Naive thymus-derived CD4-positive, alpha-beta T cell (primary cell): ENCODE measurements at regions of chr22 and their contacts with region 1.

Region 1: DNA sequence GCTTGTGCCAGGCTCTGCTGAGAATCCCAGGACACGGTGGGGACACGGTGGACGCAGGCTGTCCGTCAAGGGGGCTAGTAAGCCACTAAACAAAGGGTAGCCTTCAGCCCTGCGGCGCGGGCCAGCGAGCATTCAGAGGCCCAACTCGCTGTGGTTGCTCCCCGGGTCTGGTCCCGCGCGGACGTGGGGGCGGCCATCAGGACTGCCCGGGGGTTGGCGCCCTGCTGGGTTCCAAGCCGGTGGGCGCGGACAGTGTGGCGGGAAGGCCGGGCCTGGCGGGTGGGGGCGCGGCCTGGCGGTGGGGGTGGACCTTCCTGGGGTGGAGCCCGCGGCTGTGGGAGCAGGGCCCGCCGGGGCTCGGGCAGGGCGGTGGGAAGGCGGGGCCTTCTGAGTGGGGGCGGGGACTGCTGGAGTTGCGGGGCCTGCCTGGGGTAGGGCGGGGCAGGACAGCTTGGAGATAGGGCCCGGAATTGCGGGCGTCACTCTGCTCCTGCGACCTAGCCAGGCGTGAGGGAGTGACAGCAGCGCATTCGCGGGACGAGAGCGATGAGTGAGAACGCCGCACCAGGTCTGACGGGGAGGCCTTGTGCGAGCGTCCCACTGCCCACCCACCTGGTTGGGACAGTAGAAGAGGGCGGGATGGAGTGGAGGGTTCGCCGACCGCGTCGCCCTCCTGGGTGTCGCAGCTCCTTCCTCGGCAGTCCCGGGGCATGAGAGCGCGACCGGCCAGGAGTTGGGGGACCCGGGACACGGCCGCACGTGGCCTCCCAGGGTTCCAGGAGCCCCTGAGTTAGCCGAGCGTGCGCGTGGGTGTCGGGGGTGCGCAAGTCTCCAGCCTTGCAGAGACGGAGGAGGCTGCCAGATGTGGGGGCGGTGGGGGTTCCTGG is at the start of gene SERHL2:
- DNase-seq: peak; percentile 59 to 92 (median 77)
- ATAC-seq: peak; percentile 97
- H3K4me3 ChIP-seq: peak within 1 kb of the TSS; percentile 77
- H3K4me3 Mint-ChIP-seq: peak within 1 kb of the TSS; percentile 69 to 92 (median 84)
- H3K27ac ChIP-seq: peak within 1 kb of the TSS; percentile 47
- H3K27ac Mint-ChIP-seq: peak within 1 kb of the TSS in 6 of 9 donors; percentile 30 to 55 (median 48)
- H3K4me1 ChIP-seq: peaks cover 0 to 4% of the 10 kb centered on the region in 2 donors
- H3K4me1 Mint-ChIP-seq: peaks cover 0 to 16% (median 9%) of the 10 kb centered on the region in 7 donors
- H3K27me3 ChIP-seq: no peaks in the 10 kb centered on the region
- H3K27me3 Mint-ChIP-seq: peaks cover 0 to 4% (median 0%) of the 10 kb centered on the region in 5 donors
- total RNA-seq, gene SERHL2: 0.27 to 1.0 (median 0.82) TPM in 4 of 5 experiments, not detected in the other

Region 2: GRCh38 chr22:42169055-42169469 is 384.7 kb before region 1 on chr22:
- CTCF ChIA-PET with region 1: interaction called, 3 read pairs
- POLR2A ChIA-PET with region 1: no interaction called
- intact Hi-C with region 1: loop called in 1 of 2 experiments (anchors 5 kb)
- DNase-seq: peak; percentile 36 to 77 (median 60)
- ATAC-seq: peak; percentile 89
- H3K4me3 ChIP-seq: no peak overlapping the region
- H3K4me3 Mint-ChIP-seq: no peak overlapping the region
- H3K27ac ChIP-seq: no peak overlapping the region
- H3K27ac Mint-ChIP-seq: peak overlapping the region in 1 of 9 donors; percentile 31
- H3K4me1 ChIP-seq: peaks cover 0 to 15% of the 10 kb centered on the region in 2 donors
- H3K4me1 Mint-ChIP-seq: peaks cover 13 to 39% (median 33%) of the 10 kb centered on the region in 7 donors
- H3K27me3 ChIP-seq: no peaks in the 10 kb centered on the region
- H3K27me3 Mint-ChIP-seq: no peaks in the 10 kb centered on the region

Region 3: DNA sequence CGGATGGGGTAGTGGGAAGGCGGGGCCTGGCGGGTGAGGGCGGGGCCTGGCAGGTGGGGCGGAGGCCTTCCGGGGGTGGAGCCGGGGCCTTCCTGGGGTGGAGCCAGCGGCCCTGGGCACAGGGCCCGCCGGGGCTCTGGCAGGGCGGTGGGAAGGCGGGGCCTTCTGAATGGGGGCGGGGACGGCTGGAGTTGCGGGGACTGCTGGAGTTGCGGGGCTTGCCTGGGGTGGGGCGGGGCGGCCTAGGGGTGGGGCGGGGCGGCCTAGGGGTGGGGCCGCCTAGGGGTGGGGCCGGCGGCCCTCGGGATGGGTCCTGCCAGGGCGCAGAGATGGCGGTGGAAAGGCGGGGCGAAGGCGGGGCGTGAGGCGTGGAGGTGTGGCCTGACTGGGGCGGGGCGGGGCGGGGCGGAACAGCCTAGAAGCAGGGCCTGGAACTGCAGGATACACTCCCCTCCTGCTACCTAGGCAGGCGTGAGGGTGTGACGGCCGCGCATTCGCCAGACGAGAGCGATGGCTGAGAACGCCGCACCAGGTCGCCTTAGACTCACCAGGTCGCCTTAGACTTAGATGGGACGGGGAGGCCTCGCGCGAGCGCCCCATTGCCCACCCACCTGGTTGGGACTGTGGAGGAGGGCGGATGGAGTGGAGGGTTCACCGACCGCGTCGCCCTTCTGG is 53.4 kb before region 1 on chr22:
- CTCF ChIA-PET with region 1: no interaction called
- POLR2A ChIA-PET with region 1: no interaction called
- intact Hi-C with region 1: loop called in 1 of 2 experiments (anchors 5 kb)
- DNase-seq: peak; percentile 69 to 86 (median 82)
- ATAC-seq: peak; percentile 96
- H3K4me3 ChIP-seq: peak overlapping the region; percentile 53
- H3K4me3 Mint-ChIP-seq: peak overlapping the region; percentile 60 to 78 (median 74)
- H3K27ac ChIP-seq: peak overlapping the region; percentile 50
- H3K27ac Mint-ChIP-seq: peak overlapping the region in 3 of 9 donors; percentile 33 to 84 (median 38)
- H3K4me1 ChIP-seq: peaks cover 4 to 5% of the 10 kb centered on the region in 2 donors
- H3K4me1 Mint-ChIP-seq: peaks cover 5 to 17% (median 12%) of the 10 kb centered on the region in 7 donors
- H3K27me3 ChIP-seq: no peaks in the 10 kb centered on the region
- H3K27me3 Mint-ChIP-seq: peaks cover 0 to 2% (median 0%) of the 10 kb centered on the region in 5 donors

Region 4: DNA sequence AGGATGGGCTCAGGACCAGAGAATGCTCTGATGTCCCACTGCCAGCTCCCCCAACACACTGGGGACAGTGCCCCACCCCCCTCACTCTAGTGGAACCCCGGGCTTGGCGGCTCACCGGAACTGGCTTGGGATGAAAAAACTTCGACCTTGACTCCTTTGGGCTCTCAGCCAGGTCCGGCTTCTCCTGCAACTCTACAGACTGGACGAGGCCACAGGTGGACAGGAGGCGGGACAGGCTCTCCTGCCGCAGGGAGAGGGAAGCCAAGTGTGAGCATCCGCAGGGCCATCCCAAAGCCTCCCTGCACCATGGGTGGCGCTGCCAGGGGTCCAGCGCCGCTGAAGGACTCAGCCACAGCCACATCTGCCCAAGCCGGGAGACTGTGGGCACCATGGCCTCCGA is 37.8 kb before region 1 on chr22:
- CTCF ChIA-PET with region 1: no interaction called
- POLR2A ChIA-PET with region 1: no interaction called
- intact Hi-C with region 1: loop called in 1 of 2 experiments (anchors 5 kb)
- DNase-seq: no peak
- ATAC-seq: no peak
- H3K4me3 ChIP-seq: no peak overlapping the region
- H3K4me3 Mint-ChIP-seq: no peak overlapping the region
- H3K27ac ChIP-seq: no peak overlapping the region
- H3K27ac Mint-ChIP-seq: no peak overlapping the region
- H3K4me1 ChIP-seq: peaks cover 0 to 8% of the 10 kb centered on the region in 2 donors
- H3K4me1 Mint-ChIP-seq: peaks cover 5 to 18% (median 12%) of the 10 kb centered on the region in 7 donors
- H3K27me3 ChIP-seq: no peaks in the 10 kb centered on the region
- H3K27me3 Mint-ChIP-seq: no peaks in the 10 kb centered on the region

Region 5: GRCh38 chr22:42533638-42533977 is 20.1 kb before region 1 on chr22:
- CTCF ChIA-PET with region 1: no interaction called
- POLR2A ChIA-PET with region 1: no interaction called
- intact Hi-C with region 1: loop called (anchors 2 kb)
- DNase-seq: no peak
- ATAC-seq: no peak
- H3K4me3 ChIP-seq: peak overlapping the region; percentile 60
- H3K4me3 Mint-ChIP-seq: peak overlapping the region; percentile 72 to 92 (median 83)
- H3K27ac ChIP-seq: peak overlapping the region; percentile 39
- H3K27ac Mint-ChIP-seq: peak overlapping the region in 8 of 9 donors; percentile 55 to 95 (median 77)
- H3K4me1 ChIP-seq: peaks cover 0 to 5% of the 10 kb centered on the region in 2 donors
- H3K4me1 Mint-ChIP-seq: peaks cover 7 to 26% (median 9%) of the 10 kb centered on the region in 7 donors
- H3K27me3 ChIP-seq: no peaks in the 10 kb centered on the region
- H3K27me3 Mint-ChIP-seq: peaks cover 0 to 4% (median 0%) of the 10 kb centered on the region in 5 donors

Region 6: DNA sequence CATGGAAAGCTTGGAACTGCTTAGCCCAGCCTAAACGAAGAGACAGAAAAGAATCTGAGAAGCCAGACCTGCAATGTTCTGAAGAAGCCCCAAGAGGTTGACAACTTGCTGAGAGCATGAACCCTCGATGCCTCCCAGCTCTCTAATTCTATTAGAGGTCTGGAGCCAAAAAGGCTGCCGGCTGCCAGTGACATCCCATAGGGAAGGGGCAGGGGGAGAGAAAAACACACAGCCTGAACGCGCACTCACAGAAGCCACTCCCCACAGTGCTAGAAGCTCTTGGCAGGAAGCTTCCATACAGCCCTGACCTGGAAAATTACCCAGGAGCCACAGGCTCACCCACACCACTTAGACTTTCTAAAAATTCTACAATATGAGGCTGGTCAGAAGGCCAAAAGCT is 42.6 kb after region 1 on chr22:
- CTCF ChIA-PET with region 1: no interaction called
- POLR2A ChIA-PET with region 1: no interaction called
- intact Hi-C with region 1: no loop called
- DNase-seq: no peak
- ATAC-seq: no peak
- H3K4me3 ChIP-seq: no peak overlapping the region
- H3K4me3 Mint-ChIP-seq: no peak overlapping the region
- H3K27ac ChIP-seq: no peak overlapping the region
- H3K27ac Mint-ChIP-seq: no peak overlapping the region
- H3K4me1 ChIP-seq: no peaks in the 10 kb centered on the region
- H3K4me1 Mint-ChIP-seq: peaks cover 0 to 7% (median 3%) of the 10 kb centered on the region in 7 donors
- H3K27me3 ChIP-seq: no peaks in the 10 kb centered on the region
- H3K27me3 Mint-ChIP-seq: no peaks in the 10 kb centered on the region